Activated CD8-positive, alpha-beta memory T cell treated with anti-CD3 and anti-CD28 coated beads, Interleukin-2, amount 10 ng/mL, durations not matched to agents 7 days and 5 days (primary cell): ENCODE measurements at regions of chr3 and their contacts with region 1.

Region 1: DNA sequence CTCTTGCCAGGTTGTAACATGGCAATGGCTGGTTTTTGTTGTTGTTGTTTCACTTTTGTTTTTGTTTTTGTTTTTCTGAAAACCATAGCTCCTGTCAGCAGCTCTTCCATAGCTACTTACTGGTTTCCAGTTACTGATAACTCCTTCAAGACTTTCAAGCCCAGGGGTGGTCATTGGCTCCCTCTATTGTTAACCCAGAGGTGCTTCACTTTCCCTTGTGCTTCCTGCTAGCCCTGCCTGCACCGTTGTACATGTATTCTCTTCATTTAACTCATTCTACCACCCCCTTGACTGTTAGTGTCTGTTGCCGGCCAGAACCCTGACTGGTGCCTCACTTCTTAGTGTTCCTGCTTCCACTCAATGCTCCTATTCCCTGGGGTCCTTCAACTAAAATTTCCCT is 4.2 kb upstream of the TRAT1 start:
- DNase-seq: peak; percentile 86
- ATAC-seq: peak; percentile 93
- H3K4me3 Mint-ChIP-seq: no peak overlapping the region
- H3K27ac Mint-ChIP-seq: peak overlapping the region; percentile 78
- H3K4me1 Mint-ChIP-seq: peaks cover 31% of the 10 kb centered on the region
- H3K27me3 Mint-ChIP-seq: no peaks in the 10 kb centered on the region

Region 2: DNA sequence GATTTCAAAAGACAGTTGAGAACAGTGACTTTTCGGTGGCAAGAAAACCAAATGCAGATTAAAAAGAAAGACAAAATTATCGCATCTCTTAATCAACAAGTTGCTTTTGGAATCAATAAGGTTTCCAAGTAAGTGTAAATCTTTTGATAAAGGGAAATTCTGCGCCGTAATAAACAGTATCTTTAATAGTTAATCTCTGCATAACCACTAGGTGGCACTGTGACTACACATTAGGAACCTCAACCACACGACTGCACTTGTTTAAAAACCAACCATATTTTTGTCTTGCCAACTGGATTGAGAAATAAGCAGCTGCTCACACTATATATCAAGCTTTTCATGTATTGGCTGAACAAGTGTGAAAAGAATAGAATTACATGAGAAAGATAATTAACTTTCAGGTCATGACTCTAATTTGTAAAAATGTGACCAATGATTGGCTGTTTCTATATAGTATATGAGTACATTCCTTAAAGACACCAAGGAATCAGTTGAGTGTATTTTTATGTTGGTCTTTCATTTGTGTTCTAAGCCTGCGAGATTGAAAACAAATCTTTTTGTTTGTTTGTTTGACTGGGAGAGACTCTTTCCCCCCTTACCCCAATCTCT is 156.2 kb before region 1 on chr3:
- CTCF ChIA-PET with region 1: interaction called, 67 read pairs
- DNase-seq: peak; percentile 56
- ATAC-seq: peak; percentile 85
- H3K4me3 Mint-ChIP-seq: no peak overlapping the region
- H3K27ac Mint-ChIP-seq: no peak overlapping the region
- H3K4me1 Mint-ChIP-seq: peaks cover 17% of the 10 kb centered on the region
- H3K27me3 Mint-ChIP-seq: no peaks in the 10 kb centered on the region

Region 3: DNA sequence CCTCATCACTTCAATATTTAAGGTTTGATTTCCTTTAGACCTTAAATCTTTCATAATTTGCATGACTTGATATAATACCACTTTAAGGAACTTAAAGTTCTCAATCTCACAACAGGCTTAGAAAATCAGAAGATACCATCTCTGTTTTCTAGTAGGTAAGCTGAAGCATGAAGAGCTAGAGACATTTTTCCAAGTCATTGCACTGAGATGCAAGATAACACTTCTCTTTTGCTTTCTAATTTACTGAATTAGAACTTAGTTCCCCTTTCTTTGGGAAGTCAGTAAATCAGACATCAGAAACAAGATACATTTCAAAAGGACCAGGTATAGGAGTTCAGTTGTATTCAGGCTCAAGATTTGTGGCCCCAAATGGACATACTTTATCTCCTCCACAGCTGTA is 149.2 kb before region 1 on chr3:
- CTCF ChIA-PET with region 1: interaction called, 67 read pairs
- DNase-seq: no peak
- ATAC-seq: no peak
- H3K4me3 Mint-ChIP-seq: no peak overlapping the region
- H3K27ac Mint-ChIP-seq: no peak overlapping the region
- H3K4me1 Mint-ChIP-seq: peaks cover 19% of the 10 kb centered on the region
- H3K27me3 Mint-ChIP-seq: no peaks in the 10 kb centered on the region

Region 4: GRCh38 chr3:108806316-108806715 is 12.1 kb before region 1 on chr3:
- CTCF ChIA-PET with region 1: interaction called, 20 read pairs
- DNase-seq: peak; percentile 77
- ATAC-seq: peak; percentile 97
- H3K4me3 Mint-ChIP-seq: peak overlapping the region; percentile 44
- H3K27ac Mint-ChIP-seq: peak overlapping the region; percentile 96
- H3K4me1 Mint-ChIP-seq: peaks cover 29% of the 10 kb centered on the region
- H3K27me3 Mint-ChIP-seq: no peaks in the 10 kb centered on the region

Region 5: DNA sequence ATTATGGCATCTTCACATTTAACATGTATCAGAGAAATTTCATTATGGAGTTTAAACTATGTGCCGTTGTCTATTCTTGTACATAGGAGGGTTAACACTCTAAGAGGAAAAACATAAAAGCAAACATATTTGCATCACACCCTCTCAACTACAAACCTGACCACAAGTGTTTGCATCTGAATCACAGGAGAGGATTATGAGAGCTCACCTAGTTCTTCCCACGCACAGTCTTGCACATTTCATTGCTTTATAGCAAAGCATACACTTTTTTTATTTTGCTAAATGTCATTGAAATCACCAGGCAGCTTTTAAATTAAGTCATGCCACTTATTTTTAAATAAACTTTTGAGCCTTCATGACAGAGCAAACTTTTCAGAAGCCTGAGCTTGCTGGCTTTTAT is 16.7 kb after region 1 on chr3:
- CTCF ChIA-PET with region 1: interaction called, 74 read pairs
- DNase-seq: peak; percentile 64
- ATAC-seq: peak; percentile 73
- H3K4me3 Mint-ChIP-seq: peak overlapping the region; percentile 68
- H3K27ac Mint-ChIP-seq: peak overlapping the region; percentile 96
- H3K4me1 Mint-ChIP-seq: peaks cover 80% of the 10 kb centered on the region
- H3K27me3 Mint-ChIP-seq: no peaks in the 10 kb centered on the region

Region 6: GRCh38 chr3:109098079-109098644 is 279.8 kb after region 1 on chr3:
- CTCF ChIA-PET with region 1: no interaction called
- DNase-seq: no peak
- ATAC-seq: no peak
- H3K4me3 Mint-ChIP-seq: no peak overlapping the region
- H3K27ac Mint-ChIP-seq: no peak overlapping the region
- H3K4me1 Mint-ChIP-seq: no peaks in the 10 kb centered on the region
- H3K27me3 Mint-ChIP-seq: peaks cover 24% of the 10 kb centered on the region